CD4-positive, alpha-beta T cell (primary cell): ENCODE measurements at regions of chr2 and their contacts with region 1.

Region 1: DNA sequence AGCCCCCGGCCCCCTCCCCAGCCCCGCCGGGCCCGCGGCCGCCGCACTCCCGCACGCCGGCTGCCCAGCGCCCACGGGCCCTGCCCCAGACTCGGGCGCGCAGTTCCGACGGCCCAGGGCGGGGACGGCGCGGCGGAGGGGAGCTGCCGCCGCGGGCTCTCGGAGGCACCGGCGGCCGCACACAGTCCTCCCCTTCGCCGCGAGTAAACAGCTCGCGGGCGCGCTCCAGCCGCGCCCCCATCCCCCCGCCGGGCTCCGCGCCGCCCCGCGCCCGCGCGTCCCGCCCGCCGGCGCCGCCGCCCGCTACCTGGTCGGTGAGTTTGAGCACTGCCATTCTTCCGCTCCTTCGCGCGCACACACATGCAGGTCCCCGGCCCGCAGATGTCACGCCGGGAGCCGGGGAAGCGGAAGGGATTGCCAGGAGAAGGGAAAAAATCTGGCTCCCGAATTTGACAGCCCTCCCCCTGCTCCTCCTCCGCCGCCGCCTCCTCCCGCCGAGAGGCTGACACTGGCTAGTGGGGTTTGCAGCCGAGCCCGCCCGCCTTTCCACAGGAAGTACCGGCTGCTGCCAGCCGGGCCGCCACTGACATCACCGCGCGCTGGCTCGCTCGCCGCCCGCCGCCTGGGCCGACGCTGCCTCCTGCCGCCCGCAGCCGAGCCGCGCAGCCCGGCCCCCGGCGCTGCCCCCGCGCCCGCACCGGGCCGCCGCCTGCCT is at the start of gene ANKRD44:
- DNase-seq: peak; percentile 81 to 96 (median 86)
- ATAC-seq: peak; percentile 77
- H3K4me3 ChIP-seq: peak within 1 kb of the TSS; percentile 94
- H3K4me3 Mint-ChIP-seq: peak within 1 kb of the TSS; percentile 95
- H3K27ac ChIP-seq: peak within 1 kb of the TSS; percentile 85 to 96
- H3K27ac Mint-ChIP-seq: peak within 1 kb of the TSS; percentile 95
- H3K4me1 ChIP-seq: peaks cover 46% of the 10 kb centered on the region
- H3K4me1 Mint-ChIP-seq: peaks cover 69% of the 10 kb centered on the region
- H3K27me3 ChIP-seq: no peaks in the 10 kb centered on the region
- H3K27me3 Mint-ChIP-seq: no peaks in the 10 kb centered on the region
- CTCF ChIP-seq: no peak
- total RNA-seq, gene ANKRD44: 170 to 186 TPM

Region 2: GRCh38 chr2:197011799-197012641 is 298.4 kb before region 1 on chr2:
- CTCF ChIA-PET with region 1: no interaction called
- POLR2A ChIA-PET with region 1: no interaction called
- intact Hi-C with region 1: no loop called
- DNase-seq: peak in 6 of 14 experiments; percentile 11 to 69 (median 33)
- ATAC-seq: peak; percentile 56
- H3K4me3 ChIP-seq: no peak overlapping the region
- H3K4me3 Mint-ChIP-seq: no peak overlapping the region
- H3K27ac ChIP-seq: no peak overlapping the region
- H3K27ac Mint-ChIP-seq: peak overlapping the region; percentile 55
- H3K4me1 ChIP-seq: peaks cover 2% of the 10 kb centered on the region
- H3K4me1 Mint-ChIP-seq: peaks cover 8% of the 10 kb centered on the region
- H3K27me3 ChIP-seq: no peaks in the 10 kb centered on the region
- H3K27me3 Mint-ChIP-seq: no peaks in the 10 kb centered on the region
- CTCF ChIP-seq: peak; percentile 75

Region 3: GRCh38 chr2:197113275-197113711 is 197.1 kb before region 1 on chr2:
- CTCF ChIA-PET with region 1: interaction called, 7 read pairs
- POLR2A ChIA-PET with region 1: interaction called, 11 read pairs
- intact Hi-C with region 1: loop called (anchors 2 kb)
- DNase-seq: peak in 3 of 14 experiments; percentile 56 to 70 (median 69)
- ATAC-seq: peak; percentile 60
- H3K4me3 ChIP-seq: no peak overlapping the region
- H3K4me3 Mint-ChIP-seq: no peak overlapping the region
- H3K27ac ChIP-seq: peak overlapping the region in 1 of 2 donors; percentile 38
- H3K27ac Mint-ChIP-seq: peak overlapping the region; percentile 83
- H3K4me1 ChIP-seq: peaks cover 1% of the 10 kb centered on the region
- H3K4me1 Mint-ChIP-seq: peaks cover 36% of the 10 kb centered on the region
- H3K27me3 ChIP-seq: no peaks in the 10 kb centered on the region
- H3K27me3 Mint-ChIP-seq: no peaks in the 10 kb centered on the region
- CTCF ChIP-seq: peak; percentile 81

Region 4: DNA sequence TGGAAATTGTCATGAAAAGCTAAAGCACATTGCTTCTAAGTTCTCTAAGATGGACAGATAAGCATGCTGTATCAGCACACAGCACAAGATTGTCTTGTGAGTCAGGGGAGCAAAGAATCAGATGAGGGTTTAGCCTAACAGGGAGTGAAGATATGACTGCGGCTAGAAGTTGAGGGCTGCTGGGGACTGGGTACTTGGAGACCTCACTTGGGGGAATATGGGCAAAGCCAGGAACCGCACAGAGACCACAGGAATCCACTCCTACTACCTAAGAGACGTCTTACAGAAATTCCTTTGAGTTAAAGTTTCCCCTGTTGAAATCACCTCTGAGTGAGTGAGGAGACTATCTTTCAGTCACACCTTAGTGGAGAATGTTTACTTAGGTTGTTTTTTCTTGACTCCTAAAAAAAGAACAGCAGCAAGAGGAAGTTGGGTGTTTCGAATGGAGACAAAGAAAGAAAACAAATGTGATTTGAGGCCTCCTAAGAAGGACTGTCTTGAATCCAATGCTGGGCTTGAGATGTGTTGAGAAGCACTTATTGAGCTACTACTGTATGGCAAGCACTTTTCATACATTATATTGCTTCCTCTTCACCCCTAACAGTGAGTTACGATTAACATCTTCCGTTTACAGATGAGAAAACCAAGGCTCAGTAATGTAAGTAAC is 100.6 kb before region 1 on chr2:
- CTCF ChIA-PET with region 1: interaction called, 16 read pairs
- POLR2A ChIA-PET with region 1: interaction called, 754 read pairs
- intact Hi-C with region 1: no loop called
- DNase-seq: peak in 7 of 14 experiments; percentile 25 to 79 (median 45)
- ATAC-seq: peak; percentile 8
- H3K4me3 ChIP-seq: peak overlapping the region; percentile 15
- H3K4me3 Mint-ChIP-seq: peak overlapping the region; percentile 73
- H3K27ac ChIP-seq: peak overlapping the region; percentile 79 to 86
- H3K27ac Mint-ChIP-seq: peak overlapping the region; percentile 98
- H3K4me1 ChIP-seq: peaks cover 86% of the 10 kb centered on the region
- H3K4me1 Mint-ChIP-seq: peaks cover 98% of the 10 kb centered on the region
- H3K27me3 ChIP-seq: no peaks in the 10 kb centered on the region
- H3K27me3 Mint-ChIP-seq: no peaks in the 10 kb centered on the region
- CTCF ChIP-seq: no peak

Region 5: GRCh38 chr2:197248623-197249022 is 61.8 kb before region 1 on chr2:
- CTCF ChIA-PET with region 1: no interaction called
- POLR2A ChIA-PET with region 1: interaction called, 164 read pairs
- intact Hi-C with region 1: no loop called
- DNase-seq: peak in 5 of 14 experiments; percentile 23 to 69 (median 51)
- ATAC-seq: peak; percentile 82
- H3K4me3 ChIP-seq: no peak overlapping the region
- H3K4me3 Mint-ChIP-seq: peak overlapping the region; percentile 72
- H3K27ac ChIP-seq: peak overlapping the region in 1 of 2 donors; percentile 39
- H3K27ac Mint-ChIP-seq: peak overlapping the region; percentile 94
- H3K4me1 ChIP-seq: peaks cover 59% of the 10 kb centered on the region
- H3K4me1 Mint-ChIP-seq: peaks cover 90% of the 10 kb centered on the region
- H3K27me3 ChIP-seq: no peaks in the 10 kb centered on the region
- H3K27me3 Mint-ChIP-seq: no peaks in the 10 kb centered on the region
- CTCF ChIP-seq: no peak

Region 6: DNA sequence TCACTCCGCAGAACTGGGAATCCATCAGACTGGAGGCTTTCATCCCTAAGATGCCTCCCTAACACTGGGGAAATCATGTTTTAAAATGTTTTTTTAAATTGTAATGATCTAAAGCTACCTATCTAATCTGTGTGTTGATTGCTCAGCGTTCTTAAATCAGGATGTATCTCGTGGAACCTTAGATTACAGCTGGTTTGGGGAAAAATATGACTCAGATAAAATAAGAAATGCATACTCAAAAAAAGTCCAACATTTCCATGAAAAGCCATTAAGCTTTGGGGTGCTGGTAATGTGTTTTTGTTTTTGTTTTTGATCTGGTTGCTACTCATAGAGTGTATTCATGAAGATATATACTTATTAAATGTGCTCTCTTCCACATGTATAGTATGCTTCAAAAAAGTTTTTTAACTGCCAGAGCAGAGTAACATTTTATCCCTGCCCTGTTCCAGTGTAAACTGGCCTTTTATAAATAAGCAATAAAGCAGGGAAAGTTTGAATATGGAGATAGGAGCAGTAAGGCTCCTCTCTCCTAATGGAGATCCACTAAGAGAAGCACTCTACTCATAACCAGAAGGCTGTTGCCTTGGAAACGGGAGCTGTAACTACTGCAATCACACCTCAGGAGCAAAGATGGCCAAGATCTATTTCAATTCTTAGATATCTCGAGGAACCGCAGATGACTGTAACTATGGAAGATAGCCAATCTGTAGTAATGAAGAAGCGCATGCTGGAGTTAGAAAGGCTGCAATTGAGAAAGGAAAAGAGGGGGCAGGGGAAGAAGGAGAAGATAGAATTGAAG is 41.4 kb before region 1 on chr2:
- CTCF ChIA-PET with region 1: interaction called, 4 read pairs
- POLR2A ChIA-PET with region 1: interaction called, 58 read pairs
- intact Hi-C with region 1: loop called in 1 of 2 experiments (anchors 2 kb)
- DNase-seq: peak in 4 of 14 experiments; percentile 36 to 74 (median 64)
- ATAC-seq: peak; percentile 66
- H3K4me3 ChIP-seq: no peak overlapping the region
- H3K4me3 Mint-ChIP-seq: peak overlapping the region; percentile 35
- H3K27ac ChIP-seq: peak overlapping the region; percentile 52 to 63
- H3K27ac Mint-ChIP-seq: peak overlapping the region; percentile 78
- H3K4me1 ChIP-seq: peaks cover 80% of the 10 kb centered on the region
- H3K4me1 Mint-ChIP-seq: peaks cover 89% of the 10 kb centered on the region
- H3K27me3 ChIP-seq: no peaks in the 10 kb centered on the region
- H3K27me3 Mint-ChIP-seq: no peaks in the 10 kb centered on the region
- CTCF ChIP-seq: no peak

Region 7: GRCh38 chr2:197293252-197294007 is 17.0 kb before region 1 on chr2:
- CTCF ChIA-PET with region 1: interaction called, 23 read pairs
- POLR2A ChIA-PET with region 1: interaction called, 185 read pairs
- intact Hi-C with region 1: loop called (anchors 1 to 2 kb)
- DNase-seq: peak in 5 of 14 experiments; percentile 16 to 75 (median 55)
- ATAC-seq: peak; percentile 74
- H3K4me3 ChIP-seq: peak overlapping the region; percentile 28
- H3K4me3 Mint-ChIP-seq: peak overlapping the region; percentile 64
- H3K27ac ChIP-seq: peak overlapping the region; percentile 70 to 78
- H3K27ac Mint-ChIP-seq: peak overlapping the region; percentile 95
- H3K4me1 ChIP-seq: peaks cover 59% of the 10 kb centered on the region
- H3K4me1 Mint-ChIP-seq: peaks cover 92% of the 10 kb centered on the region
- H3K27me3 ChIP-seq: no peaks in the 10 kb centered on the region
- H3K27me3 Mint-ChIP-seq: no peaks in the 10 kb centered on the region
- CTCF ChIP-seq: no peak

Region 8: GRCh38 chr2:197378494-197379307 is 68.3 kb after region 1 on chr2:
- CTCF ChIA-PET with region 1: no interaction called
- POLR2A ChIA-PET with region 1: interaction called, 6 read pairs
- intact Hi-C with region 1: loop called (anchors 1 to 2 kb)
- DNase-seq: peak; percentile 39 to 80 (median 58)
- ATAC-seq: peak; percentile 71
- H3K4me3 ChIP-seq: no peak overlapping the region
- H3K4me3 Mint-ChIP-seq: no peak overlapping the region
- H3K27ac ChIP-seq: no peak overlapping the region
- H3K27ac Mint-ChIP-seq: no peak overlapping the region
- H3K4me1 ChIP-seq: peaks cover 7% of the 10 kb centered on the region
- H3K4me1 Mint-ChIP-seq: peaks cover 21% of the 10 kb centered on the region
- H3K27me3 ChIP-seq: no peaks in the 10 kb centered on the region
- H3K27me3 Mint-ChIP-seq: no peaks in the 10 kb centered on the region
- CTCF ChIP-seq: peak; percentile 83